ENCODE measurements at regions of chr2 and their contacts with region 1.

Region 1: GRCh38 chr2:206783718-206784117 is 18.3 kb downstream of the FASTKD2 start:
- DNase-seq: no peak
- H3K4me3 ChIP-seq: no peak overlapping the region
- H3K27ac ChIP-seq: no peak overlapping the region
- H3K4me1 ChIP-seq: no peaks in the 10 kb centered on the region
- H3K27me3 ChIP-seq: no peaks in the 10 kb centered on the region
- CTCF ChIP-seq: peak; percentile 42; the same call in 1 of the 2 replicates

Region 2: GRCh38 chr2:206392118-206392517 is 391.6 kb before region 1 on chr2:
- CTCF ChIA-PET with region 1: no interaction called
- POLR2A ChIA-PET with region 1: no interaction called
- intact Hi-C with region 1: loop called (anchors 1 kb)
- DNase-seq: peak; percentile 24 to 49
- H3K4me3 ChIP-seq: no peak overlapping the region
- H3K27ac ChIP-seq: no peak overlapping the region
- H3K4me1 ChIP-seq: no peaks in the 10 kb centered on the region
- H3K27me3 ChIP-seq: no peaks in the 10 kb centered on the region
- CTCF ChIP-seq: peak; percentile 65

Region 3: DNA sequence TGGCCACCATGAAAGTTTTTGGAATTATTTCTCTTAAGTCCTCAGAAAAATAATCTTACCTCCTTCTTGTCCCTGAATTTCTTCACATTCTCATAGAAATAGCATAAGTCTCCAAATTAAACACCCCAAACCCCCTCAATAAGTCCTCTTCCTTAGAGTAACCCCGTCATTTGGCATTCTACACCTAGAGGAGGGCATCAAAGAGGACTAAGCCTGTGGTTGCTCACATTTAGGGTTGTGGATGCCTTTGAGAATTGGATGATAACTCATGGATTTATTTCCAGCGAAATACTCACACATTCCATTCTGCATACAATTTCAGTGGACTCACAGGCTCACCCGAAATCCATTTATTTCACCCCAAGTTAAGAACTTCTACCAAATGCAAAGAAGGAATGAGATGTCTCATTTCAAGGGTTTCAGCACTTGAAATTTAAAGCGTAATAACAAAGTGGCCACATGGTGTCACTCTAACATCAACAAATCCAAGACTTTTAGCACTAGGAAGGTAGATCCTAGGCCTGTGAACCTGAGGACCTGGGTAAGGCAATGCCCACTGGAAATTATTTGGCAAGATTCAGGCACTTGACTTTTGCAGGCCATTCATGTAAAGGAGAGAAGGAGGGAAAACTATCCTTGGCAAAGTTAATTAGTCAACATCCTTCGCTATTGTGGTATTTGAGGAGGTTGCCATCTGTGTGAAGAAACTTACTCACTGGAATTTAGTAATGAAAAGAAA is 90.2 kb before region 1 on chr2:
- CTCF ChIA-PET with region 1: no interaction called
- POLR2A ChIA-PET with region 1: no interaction called
- intact Hi-C with region 1: loop called (anchors 1 kb)
- DNase-seq: peak; percentile 14 to 36
- H3K4me3 ChIP-seq: no peak overlapping the region
- H3K27ac ChIP-seq: no peak overlapping the region
- H3K4me1 ChIP-seq: no peaks in the 10 kb centered on the region
- H3K27me3 ChIP-seq: no peaks in the 10 kb centered on the region
- CTCF ChIP-seq: peak; percentile 72

Region 4: GRCh38 chr2:208265801-208266552 is 1482.3 kb after region 1 on chr2 and contains the start of gene PIKFYVE:
- CTCF ChIA-PET with region 1: interaction called, 11 read pairs
- POLR2A ChIA-PET with region 1: no interaction called
- intact Hi-C with region 1: no loop called
- DNase-seq: peak; percentile 84 to 87
- H3K4me3 ChIP-seq: peak within 1 kb of the TSS; percentile 80
- H3K27ac ChIP-seq: peak within 1 kb of the TSS; percentile 58
- H3K4me1 ChIP-seq: peaks cover 11% of the 10 kb centered on the region
- H3K27me3 ChIP-seq: no peaks in the 10 kb centered on the region
- CTCF ChIP-seq: no peak
- total RNA-seq, gene PIKFYVE: 11.7 and 14.6 TPM in 2 replicates